Psoas muscle (tissue), 8 donors: ENCODE measurements at regions of chr15 and their contacts with region 1.

Region 1: DNA sequence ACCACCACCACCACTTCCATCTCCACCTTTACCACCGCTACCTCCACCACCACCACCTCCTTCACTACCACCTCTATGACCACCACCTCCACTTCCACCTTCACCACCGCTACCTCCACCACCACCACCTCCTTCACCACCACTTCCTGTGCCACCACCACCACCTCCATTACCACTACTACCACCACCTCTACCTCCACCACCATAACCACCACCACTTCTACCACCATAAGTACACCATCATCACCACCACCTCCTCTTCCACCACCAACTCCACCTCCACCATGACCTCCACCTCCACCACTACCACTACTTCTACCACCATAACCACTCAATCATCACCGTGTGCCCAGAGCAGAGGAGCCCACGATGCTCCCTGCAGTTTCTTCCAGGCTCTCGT is 127.9 kb upstream of the TJP1 start:
- DNase-seq: no peak
- ATAC-seq: no peak
- H3K4me3 ChIP-seq: no peak overlapping the region
- H3K27ac ChIP-seq: no peak overlapping the region
- H3K4me1 ChIP-seq: no peaks in the 10 kb centered on the region
- H3K27me3 ChIP-seq: peaks cover 0 to 2% (median 0%) of the 10 kb centered on the region in 3 donors
- CTCF ChIP-seq: no peak

Region 2: GRCh38 chr15:29970405-29970701 is 20.2 kb after region 1 on chr15:
- intact Hi-C with region 1: loop called in 1 of 2 experiments (anchors 2 kb)
- DNase-seq: no peak
- ATAC-seq: no peak
- H3K4me3 ChIP-seq: no peak overlapping the region
- H3K27ac ChIP-seq: no peak overlapping the region
- H3K4me1 ChIP-seq: no peaks in the 10 kb centered on the region
- H3K27me3 ChIP-seq: peaks cover 15 to 62% (median 23%) of the 10 kb centered on the region in 3 donors
- CTCF ChIP-seq: no peak